WTC11 (cell line): ENCODE measurements at regions of chr5 and their contacts with region 1.

Region 1: DNA sequence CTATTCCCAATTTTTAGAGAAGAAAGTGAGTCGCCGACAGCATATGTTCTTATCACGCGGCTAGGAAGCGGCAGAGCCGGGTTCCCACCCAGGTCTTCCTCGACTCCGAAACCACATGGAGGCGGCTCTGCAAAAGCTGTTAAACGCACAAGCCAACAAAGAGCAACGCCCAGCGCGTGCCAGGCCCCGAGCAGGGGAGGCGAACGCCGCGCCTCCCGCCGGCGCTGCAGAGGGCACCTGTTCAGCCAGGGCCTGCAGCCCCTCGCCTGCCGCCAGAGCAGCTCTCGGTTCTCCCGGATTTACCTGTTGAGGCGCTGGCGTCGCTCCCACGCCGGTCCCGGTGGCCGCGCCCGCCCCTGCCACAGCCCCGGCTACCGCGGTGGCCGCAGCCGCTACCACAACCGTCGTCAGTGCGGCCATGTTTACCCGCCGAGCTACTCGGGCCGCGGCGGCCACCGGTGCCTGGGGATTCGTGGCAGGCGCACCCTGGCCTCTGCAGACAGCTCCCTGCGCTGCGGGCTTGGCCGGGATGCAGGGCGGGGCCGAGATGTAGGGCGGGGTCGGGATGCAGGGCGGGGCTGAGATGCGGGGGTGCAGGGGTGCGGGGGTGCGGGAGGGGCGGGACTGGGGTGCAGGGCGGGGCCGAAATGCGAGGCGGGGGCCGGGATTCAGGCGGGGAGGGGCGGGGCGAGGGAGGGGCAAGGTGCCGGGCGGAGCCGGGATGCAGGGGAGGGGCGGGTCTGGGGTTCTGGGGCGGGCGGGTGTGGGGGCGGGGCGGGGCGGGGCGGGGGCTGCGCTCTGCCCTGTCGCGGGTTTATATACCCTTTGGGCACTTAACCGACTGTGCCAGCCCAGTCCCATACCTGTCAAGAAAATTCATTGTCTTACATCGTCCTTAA is at the start of gene CCDC112:
- DNase-seq: peak; percentile 88
- ATAC-seq: peak; percentile 96
- H3K4me3 Mint-ChIP-seq: peak within 1 kb of the TSS; percentile 98
- H3K27ac Mint-ChIP-seq: peak within 1 kb of the TSS; percentile 92; the same call in 1 of the 2 replicates
- H3K4me1 Mint-ChIP-seq: peaks cover 16% of the 10 kb centered on the region
- H3K27me3 Mint-ChIP-seq: peaks cover 5% of the 10 kb centered on the region
- CTCF ChIP-seq: no peak
- total RNA-seq, gene CCDC112: 10.8 to 12.2 TPM (median 11.6 TPM) in 3 replicates

Region 2: GRCh38 chr5:114727358-114727757 is 569.0 kb before region 1 on chr5:
- CTCF ChIA-PET with region 1: no interaction called
- POLR2A ChIA-PET with region 1: no interaction called
- DNase-seq: no peak
- ATAC-seq: no peak
- H3K4me3 Mint-ChIP-seq: no peak overlapping the region
- H3K27ac Mint-ChIP-seq: no peak overlapping the region
- H3K4me1 Mint-ChIP-seq: peaks cover 5% of the 10 kb centered on the region; the same call in 1 of the 2 replicates
- H3K27me3 Mint-ChIP-seq: no peaks in the 10 kb centered on the region; the same call in 1 of the 2 replicates
- CTCF ChIP-seq: no peak

Region 3: GRCh38 chr5:115342590-115343377 is 46.4 kb after region 1 on chr5:
- CTCF ChIA-PET with region 1: no interaction called
- POLR2A ChIA-PET with region 1: no interaction called
- DNase-seq: no peak
- ATAC-seq: peak; percentile 74
- H3K4me3 Mint-ChIP-seq: no peak overlapping the region
- H3K27ac Mint-ChIP-seq: no peak overlapping the region
- H3K4me1 Mint-ChIP-seq: peaks cover 3% of the 10 kb centered on the region
- H3K27me3 Mint-ChIP-seq: no peaks in the 10 kb centered on the region; the same call in 1 of the 2 replicates
- CTCF ChIP-seq: no peak

Region 4: GRCh38 chr5:115435778-115436712 is 139.7 kb after region 1 on chr5:
- CTCF ChIA-PET with region 1: no interaction called
- POLR2A ChIA-PET with region 1: no interaction called
- DNase-seq: no peak
- ATAC-seq: no peak
- H3K4me3 Mint-ChIP-seq: no peak overlapping the region
- H3K27ac Mint-ChIP-seq: no peak overlapping the region
- H3K4me1 Mint-ChIP-seq: no peaks in the 10 kb centered on the region
- H3K27me3 Mint-ChIP-seq: no peaks in the 10 kb centered on the region; the same call in 1 of the 2 replicates
- CTCF ChIP-seq: no peak

Region 5: GRCh38 chr5:115544436-115545350 is 248.3 kb after region 1 on chr5 and contains the start of gene FEM1C:
- CTCF ChIA-PET with region 1: no interaction called
- POLR2A ChIA-PET with region 1: interaction called, 17 read pairs
- DNase-seq: peak; percentile 96
- ATAC-seq: peak; percentile 96
- H3K4me3 Mint-ChIP-seq: peak within 1 kb of the TSS; percentile 93
- H3K27ac Mint-ChIP-seq: peak within 1 kb of the TSS; percentile 96
- H3K4me1 Mint-ChIP-seq: peaks cover 47% of the 10 kb centered on the region
- H3K27me3 Mint-ChIP-seq: peaks cover 6% of the 10 kb centered on the region
- CTCF ChIP-seq: no peak
- total RNA-seq, gene FEM1C: 12.1 to 13.6 TPM (median 12.4 TPM) in 3 replicates